ENCODE measurements at regions of chr17 and their contacts with region 1.

Region 1: DNA sequence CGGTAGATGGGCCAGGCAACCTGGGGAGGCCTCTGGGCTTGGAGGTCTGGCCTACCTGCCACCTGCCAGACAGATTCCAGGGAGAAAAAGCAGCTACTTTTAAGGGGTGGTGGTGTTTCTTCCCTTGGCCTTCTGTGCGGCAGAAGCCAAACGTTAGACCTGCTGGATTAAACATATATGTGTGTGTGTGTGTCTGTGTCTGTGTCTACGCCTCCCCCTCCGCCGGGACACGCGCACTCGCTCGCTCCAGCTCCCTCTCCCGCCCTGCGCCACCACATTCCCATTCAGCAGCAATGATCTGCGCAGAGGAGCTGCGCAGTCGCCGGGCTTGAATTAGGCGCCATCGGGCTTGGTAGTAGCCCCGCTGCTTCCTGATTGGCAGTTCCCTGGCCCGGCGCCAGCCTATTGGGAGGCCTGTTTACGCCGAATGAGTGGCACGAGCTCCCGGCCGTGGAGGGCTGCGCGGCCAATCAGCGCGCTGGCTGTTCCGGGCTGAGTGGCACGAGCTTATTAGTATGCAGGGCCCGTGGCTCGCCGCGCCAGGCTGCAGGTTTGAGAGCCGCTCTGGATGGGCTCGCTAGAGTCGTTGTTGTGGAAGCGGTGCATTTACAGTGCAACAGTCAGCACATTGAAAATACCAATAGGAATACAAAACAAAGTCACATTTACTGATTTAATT is at the start of gene BAHCC1:
- DNase-seq: peak; percentile 100
- H3K4me3 Mint-ChIP-seq: peak within 1 kb of the TSS; percentile 89
- H3K27ac Mint-ChIP-seq: peak within 1 kb of the TSS; percentile 99
- H3K4me1 Mint-ChIP-seq: peaks cover 16% of the 10 kb centered on the region
- H3K27me3 Mint-ChIP-seq: no peaks in the 10 kb centered on the region
- CTCF ChIP-seq: no peak
- total RNA-seq, gene BAHCC1: 7.4 and 9.2 TPM in 2 replicates

Region 2: GRCh38 chr17:81253358-81254131 is 141.5 kb before region 1 on chr17:
- CTCF ChIA-PET with region 1: interaction called, 4 read pairs
- POLR2A ChIA-PET with region 1: interaction called, 4 read pairs
- intact Hi-C with region 1: loop called (anchors 2 kb)
- DNase-seq: peak; percentile 45
- H3K4me3 Mint-ChIP-seq: no peak overlapping the region
- H3K27ac Mint-ChIP-seq: no peak overlapping the region
- H3K4me1 Mint-ChIP-seq: no peaks in the 10 kb centered on the region
- H3K27me3 Mint-ChIP-seq: no peaks in the 10 kb centered on the region
- CTCF ChIP-seq: peak; percentile 72

Region 3: GRCh38 chr17:81309070-81309905 is 85.8 kb before region 1 on chr17:
- CTCF ChIA-PET with region 1: interaction called, 7 read pairs
- POLR2A ChIA-PET with region 1: interaction called, 5 read pairs
- intact Hi-C with region 1: loop called (anchors 5 kb)
- DNase-seq: peak; percentile 74
- H3K4me3 Mint-ChIP-seq: peak overlapping the region; percentile 68
- H3K27ac Mint-ChIP-seq: peak overlapping the region; percentile 32
- H3K4me1 Mint-ChIP-seq: peaks cover 22% of the 10 kb centered on the region
- H3K27me3 Mint-ChIP-seq: no peaks in the 10 kb centered on the region
- CTCF ChIP-seq: peak; percentile 32

Region 4: GRCh38 chr17:81365148-81365600 is 29.9 kb before region 1 on chr17:
- CTCF ChIA-PET with region 1: interaction called, 6 read pairs
- POLR2A ChIA-PET with region 1: interaction called, 27 read pairs
- intact Hi-C with region 1: no loop called
- DNase-seq: peak; percentile 90
- H3K4me3 Mint-ChIP-seq: peak overlapping the region; percentile 60
- H3K27ac Mint-ChIP-seq: peak overlapping the region; percentile 69
- H3K4me1 Mint-ChIP-seq: peaks cover 24% of the 10 kb centered on the region
- H3K27me3 Mint-ChIP-seq: no peaks in the 10 kb centered on the region
- CTCF ChIP-seq: no peak

Region 5: GRCh38 chr17:81419328-81419885 is 24.3 kb after region 1 on chr17:
- CTCF ChIA-PET with region 1: interaction called, 5 read pairs
- POLR2A ChIA-PET with region 1: interaction called, 12 read pairs
- intact Hi-C with region 1: no loop called
- DNase-seq: peak; percentile 93
- H3K4me3 Mint-ChIP-seq: peak overlapping the region; percentile 59
- H3K27ac Mint-ChIP-seq: no peak overlapping the region
- H3K4me1 Mint-ChIP-seq: peaks cover 14% of the 10 kb centered on the region
- H3K27me3 Mint-ChIP-seq: no peaks in the 10 kb centered on the region
- CTCF ChIP-seq: no peak

Region 6: GRCh38 chr17:81512560-81513371 is 117.7 kb after region 1 on chr17 and contains the start of gene ACTG1:
- CTCF ChIA-PET with region 1: interaction called, 4 read pairs
- POLR2A ChIA-PET with region 1: interaction called, 169 read pairs
- intact Hi-C with region 1: no loop called
- DNase-seq: peak; percentile 92
- H3K4me3 Mint-ChIP-seq: peak within 1 kb of the TSS; percentile 92
- H3K27ac Mint-ChIP-seq: peak within 1 kb of the TSS; percentile 91
- H3K4me1 Mint-ChIP-seq: peaks cover 25% of the 10 kb centered on the region
- H3K27me3 Mint-ChIP-seq: no peaks in the 10 kb centered on the region
- CTCF ChIP-seq: no peak
- total RNA-seq, gene ACTG1: 1,056 and 1,461 TPM in 2 replicates

Measured in MCF 10A (cell line).